Naive thymus-derived CD4-positive, alpha-beta T cell (primary cell): ENCODE measurements at regions of chr11 and their contacts with region 1.

Region 1: DNA sequence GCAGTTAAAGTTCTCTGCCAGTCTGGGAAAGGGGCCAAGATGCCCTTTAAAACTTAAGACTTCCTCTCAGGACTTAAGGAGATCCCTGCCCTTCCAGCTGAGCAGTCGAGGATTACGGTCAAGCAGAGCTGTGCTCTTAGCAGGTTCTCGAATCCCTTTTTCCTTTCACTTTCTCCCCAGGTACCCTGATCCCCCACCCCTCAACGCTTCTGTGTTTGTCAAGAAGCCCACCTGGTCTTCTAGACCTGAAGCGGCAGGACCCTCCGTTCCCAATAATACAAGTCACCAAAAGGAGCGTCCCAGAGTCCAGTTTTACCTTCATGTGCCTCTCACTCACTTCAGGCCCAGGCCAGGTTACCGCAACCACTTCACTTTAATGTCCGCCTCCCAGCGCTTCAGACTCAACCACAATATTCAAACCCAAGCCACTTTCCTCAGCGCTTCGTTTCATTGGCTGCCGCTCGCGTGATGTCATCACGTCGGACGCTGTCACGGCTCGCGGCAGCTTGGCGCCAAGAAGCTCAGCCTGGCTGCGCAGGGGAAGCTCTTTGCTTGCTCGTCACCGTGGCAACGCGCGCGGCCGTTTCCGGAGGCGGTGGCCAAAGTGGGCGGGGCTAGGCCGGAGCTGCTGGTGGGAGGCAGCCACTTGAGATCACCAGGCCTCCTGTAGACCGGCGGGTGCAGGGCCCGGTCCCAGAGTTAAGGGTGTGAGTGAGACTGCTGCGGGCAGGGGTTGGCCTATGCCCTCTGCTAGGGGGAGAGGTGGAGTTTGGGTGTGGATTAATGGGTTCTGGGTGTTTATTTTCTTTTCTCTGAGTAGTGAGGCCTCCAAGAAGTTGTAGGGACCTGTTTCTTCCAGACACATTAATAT is at the starts of genes KIF18A and METTL15:
- DNase-seq: peak; percentile 94 to 98 (median 95)
- ATAC-seq: peak; percentile 94
- H3K4me3 ChIP-seq: peak within 1 kb of the TSS; percentile 98
- H3K4me3 Mint-ChIP-seq: peak within 1 kb of the TSS; percentile 89 to 98 (median 96)
- H3K27ac ChIP-seq: peak within 1 kb of the TSS; percentile 92
- H3K27ac Mint-ChIP-seq: peak within 1 kb of the TSS; percentile 96 to 100 (median 97)
- H3K4me1 ChIP-seq: peaks cover 19 to 27% of the 10 kb centered on the region in 2 donors
- H3K4me1 Mint-ChIP-seq: peaks cover 29 to 64% (median 61%) of the 10 kb centered on the region in 7 donors
- H3K27me3 ChIP-seq: no peaks in the 10 kb centered on the region
- H3K27me3 Mint-ChIP-seq: no peaks in the 10 kb centered on the region
- total RNA-seq, gene KIF18A: 0.59 to 21.3 (median 1.8) TPM
- total RNA-seq, gene METTL15: 8.4 to 14.9 (median 13.8) TPM

Region 2: DNA sequence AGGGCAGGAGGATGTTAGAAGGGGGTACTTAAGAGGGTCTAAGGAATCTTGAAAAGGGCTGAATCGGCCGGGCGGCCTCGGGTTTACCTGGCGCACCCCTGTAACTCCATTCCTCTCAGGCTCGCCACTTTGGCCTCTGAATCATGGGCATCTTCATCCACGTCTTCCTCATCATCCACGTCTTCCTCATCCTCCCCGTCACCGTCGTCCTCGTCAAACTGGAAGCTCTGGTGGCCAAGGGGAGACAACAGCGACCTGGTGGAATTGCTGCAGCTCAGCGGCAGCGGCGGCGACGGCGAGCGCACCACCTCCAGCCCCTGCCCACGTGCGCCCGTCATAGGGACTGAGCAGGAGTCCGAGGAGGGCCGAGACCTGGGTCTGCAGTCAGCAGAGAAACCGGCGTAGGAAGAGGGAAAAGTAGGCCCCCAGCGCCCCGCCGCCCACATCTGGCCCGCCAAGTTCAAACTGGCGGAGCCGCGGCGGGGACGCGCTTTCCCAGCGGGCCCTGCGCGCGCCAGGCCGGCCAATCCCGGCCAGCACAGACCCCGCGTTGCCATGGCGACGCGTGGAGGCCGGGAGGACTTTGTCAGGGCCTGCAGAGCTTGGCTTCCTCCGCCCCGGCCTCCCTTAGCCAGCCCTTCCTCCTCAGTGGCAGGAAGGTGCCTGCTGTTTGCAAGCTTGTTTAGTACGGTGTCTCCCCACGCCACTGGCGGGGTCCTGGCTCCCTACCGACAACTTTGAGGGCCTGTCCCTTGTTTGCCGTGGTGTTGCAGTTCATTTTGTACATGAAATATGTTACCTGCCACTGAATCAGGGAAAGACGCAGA is 745.0 kb before region 1 on chr11 and contains the start of gene CCDC34:
- CTCF ChIA-PET with region 1: no interaction called
- POLR2A ChIA-PET with region 1: interaction called, 3 read pairs
- intact Hi-C with region 1: loop called (anchors 1 kb)
- DNase-seq: peak; percentile 83 to 91 (median 90)
- ATAC-seq: peak; percentile 99
- H3K4me3 ChIP-seq: peak within 1 kb of the TSS; percentile 51
- H3K4me3 Mint-ChIP-seq: peak within 1 kb of the TSS; percentile 78 to 96 (median 91)
- H3K27ac ChIP-seq: peak within 1 kb of the TSS; percentile 66
- H3K27ac Mint-ChIP-seq: peak within 1 kb of the TSS; percentile 80 to 97 (median 87)
- H3K4me1 ChIP-seq: peaks cover 10 to 12% of the 10 kb centered on the region in 2 donors
- H3K4me1 Mint-ChIP-seq: peaks cover 12 to 48% (median 28%) of the 10 kb centered on the region in 7 donors
- H3K27me3 ChIP-seq: no peaks in the 10 kb centered on the region
- H3K27me3 Mint-ChIP-seq: no peaks in the 10 kb centered on the region
- total RNA-seq, gene CCDC34: 1.3 to 10.0 (median 3.6) TPM

Region 3: GRCh38 chr11:27472398-27473016 is 635.5 kb before region 1 on chr11 and contains the start of gene LGR4:
- CTCF ChIA-PET with region 1: no interaction called
- POLR2A ChIA-PET with region 1: no interaction called
- intact Hi-C with region 1: loop called in 1 of 2 experiments (anchors 1 kb)
- DNase-seq: peak; percentile 33 to 79 (median 70)
- ATAC-seq: peak; percentile 90
- H3K4me3 ChIP-seq: peak within 1 kb of the TSS; percentile 73
- H3K4me3 Mint-ChIP-seq: peak within 1 kb of the TSS; percentile 88 to 98 (median 96)
- H3K27ac ChIP-seq: peak within 1 kb of the TSS; percentile 33
- H3K27ac Mint-ChIP-seq: peak within 1 kb of the TSS; percentile 18 to 90 (median 77)
- H3K4me1 ChIP-seq: peaks cover 4 to 10% of the 10 kb centered on the region in 2 donors
- H3K4me1 Mint-ChIP-seq: peaks cover 6 to 29% (median 21%) of the 10 kb centered on the region in 7 donors
- H3K27me3 ChIP-seq: no peaks in the 10 kb centered on the region
- H3K27me3 Mint-ChIP-seq: peaks cover 0 to 59% (median 7%) of the 10 kb centered on the region in 5 donors
- total RNA-seq, gene LGR4: 0.05 to 1.5 (median 0.95) TPM

Region 4: DNA sequence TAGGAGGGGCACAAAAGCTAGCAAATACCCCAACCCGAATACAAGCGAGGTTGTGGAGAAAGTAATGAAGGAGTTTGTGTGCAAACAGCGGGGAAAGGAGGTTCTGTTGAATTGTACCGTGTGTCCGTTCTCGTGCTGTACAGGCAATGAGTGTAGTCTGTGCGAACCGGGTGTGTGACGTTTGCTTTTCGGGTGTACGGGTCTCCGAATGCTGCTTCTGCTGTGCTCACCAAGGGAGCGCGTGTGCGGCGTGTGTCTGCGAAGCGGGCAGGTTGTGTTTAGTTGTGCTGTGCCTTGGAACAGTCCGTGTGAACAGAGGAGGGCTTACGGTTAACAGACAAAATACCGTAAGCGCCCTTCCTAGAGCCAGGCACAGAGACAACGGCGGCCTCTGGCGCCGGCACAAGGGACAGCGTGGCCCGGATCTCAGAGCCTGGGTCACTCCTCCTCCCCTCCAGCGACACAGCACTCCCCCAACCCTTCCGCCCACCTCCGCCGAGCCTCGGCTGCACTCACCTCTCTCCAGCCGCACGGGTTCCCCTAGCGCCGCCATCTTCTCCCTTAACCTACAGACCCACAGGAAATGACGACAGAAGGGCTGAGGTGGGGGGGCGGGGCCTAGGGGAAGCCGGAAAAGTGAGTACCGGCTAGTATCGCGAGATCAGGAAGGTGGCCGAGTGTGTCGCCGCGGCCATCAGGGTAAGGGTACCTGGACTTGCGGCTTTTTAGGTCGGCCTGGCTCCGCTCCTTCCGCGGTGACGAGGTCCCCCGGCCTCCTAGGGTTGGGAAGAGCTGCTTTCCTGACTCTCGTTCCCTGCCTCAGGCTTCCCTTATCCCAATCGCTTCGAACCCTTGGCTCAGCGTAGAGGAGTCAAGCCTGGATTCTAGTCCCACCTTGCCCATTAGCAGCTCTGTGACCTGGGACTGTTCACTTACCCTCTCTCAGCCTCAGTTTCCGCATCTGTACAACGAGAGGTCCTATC is 601.5 kb before region 1 on chr11 and contains the start of gene LIN7C:
- CTCF ChIA-PET with region 1: no interaction called
- POLR2A ChIA-PET with region 1: no interaction called
- intact Hi-C with region 1: loop called (anchors 1 kb)
- DNase-seq: peak; percentile 69 to 98 (median 90)
- ATAC-seq: peak; percentile 95
- H3K4me3 ChIP-seq: peak within 1 kb of the TSS; percentile 92
- H3K4me3 Mint-ChIP-seq: peak within 1 kb of the TSS; percentile 88 to 100 (median 99)
- H3K27ac ChIP-seq: peak within 1 kb of the TSS; percentile 89
- H3K27ac Mint-ChIP-seq: peak within 1 kb of the TSS; percentile 96 to 100 (median 99)
- H3K4me1 ChIP-seq: peaks cover 18 to 34% of the 10 kb centered on the region in 2 donors
- H3K4me1 Mint-ChIP-seq: peaks cover 32 to 71% (median 61%) of the 10 kb centered on the region in 7 donors
- H3K27me3 ChIP-seq: no peaks in the 10 kb centered on the region
- H3K27me3 Mint-ChIP-seq: no peaks in the 10 kb centered on the region
- total RNA-seq, gene LIN7C: 21.4 to 31.3 (median 25.4) TPM

Region 5: DNA sequence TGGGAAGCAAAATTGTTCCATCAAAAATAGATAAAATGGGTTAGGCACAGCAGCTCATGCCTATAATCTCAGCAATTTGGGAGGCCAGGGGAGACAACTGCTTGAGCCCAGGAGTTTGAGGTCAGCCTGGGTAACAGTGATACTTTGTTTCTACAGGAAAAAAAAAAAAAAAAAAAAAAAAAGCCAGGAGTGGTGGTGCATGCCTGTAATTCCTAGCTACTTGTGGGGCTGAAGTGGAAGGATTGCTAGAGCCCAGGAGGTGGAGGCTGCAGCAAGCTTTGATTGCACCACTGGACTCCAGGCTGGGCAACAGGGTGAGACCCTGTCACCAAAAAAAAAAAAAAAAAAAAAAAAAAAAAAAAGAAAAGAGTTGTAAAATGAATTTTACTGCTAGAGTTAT is 49.6 kb before region 1 on chr11:
- CTCF ChIA-PET with region 1: no interaction called
- POLR2A ChIA-PET with region 1: no interaction called
- intact Hi-C with region 1: no loop called
- DNase-seq: no peak
- ATAC-seq: no peak
- H3K4me3 ChIP-seq: no peak overlapping the region
- H3K4me3 Mint-ChIP-seq: no peak overlapping the region
- H3K27ac ChIP-seq: no peak overlapping the region
- H3K27ac Mint-ChIP-seq: no peak overlapping the region
- H3K4me1 ChIP-seq: no peaks in the 10 kb centered on the region
- H3K4me1 Mint-ChIP-seq: no peaks in the 10 kb centered on the region
- H3K27me3 ChIP-seq: no peaks in the 10 kb centered on the region
- H3K27me3 Mint-ChIP-seq: no peaks in the 10 kb centered on the region

Region 6: DNA sequence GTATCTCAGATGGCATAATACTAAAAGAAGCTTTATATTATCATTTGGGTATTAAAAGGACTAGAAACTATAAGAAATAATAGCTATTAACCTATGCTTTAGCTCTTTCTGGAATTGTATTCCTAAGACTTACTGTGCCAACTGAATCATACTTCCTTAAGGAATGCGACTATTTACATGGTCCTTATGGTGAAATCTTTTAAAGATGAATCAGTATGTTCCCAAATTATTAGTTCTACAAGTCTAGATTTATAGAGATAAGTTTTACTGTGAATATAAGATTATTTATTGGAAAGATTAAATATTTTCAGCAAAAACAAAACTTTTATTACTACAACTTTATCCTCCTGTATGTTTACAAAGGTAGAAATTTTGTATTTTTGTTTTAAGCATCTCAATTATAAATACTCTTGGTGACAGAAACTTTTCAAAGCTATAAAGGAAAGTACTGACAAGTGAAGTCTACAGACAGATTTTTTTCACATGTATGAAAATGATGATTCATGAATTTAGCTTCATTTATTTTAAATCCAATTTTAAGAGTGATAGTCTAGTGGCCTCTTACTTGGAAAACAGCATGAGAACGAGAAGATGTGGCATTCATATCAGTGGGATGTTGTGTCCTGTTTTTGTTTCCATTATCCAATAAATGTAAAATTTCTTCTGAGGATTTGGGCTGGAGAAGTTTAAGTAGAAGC is 17.8 kb before region 1 on chr11:
- CTCF ChIA-PET with region 1: interaction called, 4 read pairs
- POLR2A ChIA-PET with region 1: no interaction called
- intact Hi-C with region 1: loop called in 1 of 2 experiments (anchors 2 kb)
- DNase-seq: no peak
- ATAC-seq: no peak
- H3K4me3 ChIP-seq: no peak overlapping the region
- H3K4me3 Mint-ChIP-seq: no peak overlapping the region
- H3K27ac ChIP-seq: no peak overlapping the region
- H3K27ac Mint-ChIP-seq: no peak overlapping the region
- H3K4me1 ChIP-seq: no peaks in the 10 kb centered on the region
- H3K4me1 Mint-ChIP-seq: peaks cover 0 to 10% (median 0%) of the 10 kb centered on the region in 7 donors
- H3K27me3 ChIP-seq: no peaks in the 10 kb centered on the region
- H3K27me3 Mint-ChIP-seq: no peaks in the 10 kb centered on the region

Region 7: GRCh38 chr11:28123151-28123581 is 15.2 kb after region 1 on chr11:
- CTCF ChIA-PET with region 1: interaction called, 4 read pairs
- POLR2A ChIA-PET with region 1: no interaction called
- intact Hi-C with region 1: loop called in 1 of 2 experiments (anchors 2 kb)
- DNase-seq: no peak
- ATAC-seq: no peak
- H3K4me3 ChIP-seq: no peak overlapping the region
- H3K4me3 Mint-ChIP-seq: no peak overlapping the region
- H3K27ac ChIP-seq: no peak overlapping the region
- H3K27ac Mint-ChIP-seq: no peak overlapping the region
- H3K4me1 ChIP-seq: peaks cover 0 to 3% of the 10 kb centered on the region in 2 donors
- H3K4me1 Mint-ChIP-seq: peaks cover 0 to 27% (median 14%) of the 10 kb centered on the region in 7 donors
- H3K27me3 ChIP-seq: no peaks in the 10 kb centered on the region
- H3K27me3 Mint-ChIP-seq: no peaks in the 10 kb centered on the region